ENCODE measurements at regions of chr15 and their contacts with region 1.

Region 1: DNA sequence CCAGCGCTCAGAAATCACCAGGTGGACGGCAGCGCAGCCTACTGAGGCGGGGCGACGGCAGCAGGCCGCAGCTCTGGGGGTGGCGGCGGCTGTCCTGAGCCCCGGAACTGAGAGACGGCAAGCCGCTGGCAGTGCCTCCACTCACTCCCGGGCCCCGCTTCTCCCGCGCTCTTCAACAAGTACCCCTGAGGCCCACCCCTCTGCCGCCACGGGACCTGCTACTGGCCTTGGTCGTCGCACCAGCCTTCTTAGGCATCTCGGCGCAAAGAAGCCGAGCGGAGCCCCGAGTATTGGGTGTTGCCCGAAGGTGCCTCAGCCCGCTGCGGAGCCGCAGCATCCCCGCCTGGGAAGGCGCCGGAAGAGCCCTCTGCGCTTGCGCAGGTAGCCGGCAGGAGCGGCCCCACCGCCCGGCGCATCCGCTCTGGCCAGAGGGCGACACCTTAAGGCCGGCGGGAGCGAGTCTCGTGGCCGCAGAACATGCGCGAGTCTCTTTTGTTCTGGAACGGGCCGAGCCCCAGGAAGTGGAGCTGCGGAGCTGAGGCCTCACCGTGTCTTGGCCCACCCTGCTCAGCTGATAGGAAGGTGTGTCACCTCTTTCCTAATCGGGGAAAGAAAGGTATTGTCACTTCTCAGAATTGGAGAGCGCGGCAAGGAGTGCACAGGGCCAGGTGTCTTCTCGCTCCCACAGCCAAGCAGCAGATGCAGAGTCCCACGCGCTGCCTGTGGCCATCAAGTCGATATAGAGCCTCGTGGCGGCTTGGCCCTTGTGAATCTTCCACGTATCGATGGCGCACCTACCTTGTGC is at the start of gene C15orf40:
- DNase-seq: peak; percentile 89
- H3K4me3 Mint-ChIP-seq: peak within 1 kb of the TSS; percentile 82
- H3K27ac Mint-ChIP-seq: peak within 1 kb of the TSS; percentile 82
- H3K4me1 Mint-ChIP-seq: peaks cover 24% of the 10 kb centered on the region
- H3K27me3 Mint-ChIP-seq: no peaks in the 10 kb centered on the region
- CTCF ChIP-seq: peak; percentile 37
- total RNA-seq, gene C15orf40: 38.1 and 39.3 TPM in 2 replicates

Region 2: GRCh38 chr15:82809404-82810060 is 201.9 kb before region 1 on chr15 and contains the start of gene WHAMM:
- CTCF ChIA-PET with region 1: interaction called, 4 read pairs
- POLR2A ChIA-PET with region 1: interaction called, 11 read pairs
- intact Hi-C with region 1: no loop called
- DNase-seq: peak; percentile 100
- H3K4me3 Mint-ChIP-seq: peak within 1 kb of the TSS; percentile 84
- H3K27ac Mint-ChIP-seq: peak within 1 kb of the TSS; percentile 84
- H3K4me1 Mint-ChIP-seq: peaks cover 22% of the 10 kb centered on the region
- H3K27me3 Mint-ChIP-seq: no peaks in the 10 kb centered on the region
- CTCF ChIP-seq: no peak
- total RNA-seq, gene WHAMM: 8.2 and 10.1 TPM in 2 replicates

Region 3: GRCh38 chr15:82999905-83000671 is 11.4 kb before region 1 on chr15:
- CTCF ChIA-PET with region 1: interaction called, 24 read pairs
- POLR2A ChIA-PET with region 1: interaction called, 13 read pairs
- intact Hi-C with region 1: no loop called
- DNase-seq: peak; percentile 59
- H3K4me3 Mint-ChIP-seq: peak overlapping the region; percentile 67
- H3K27ac Mint-ChIP-seq: peak overlapping the region; percentile 69
- H3K4me1 Mint-ChIP-seq: no peaks in the 10 kb centered on the region
- H3K27me3 Mint-ChIP-seq: no peaks in the 10 kb centered on the region
- CTCF ChIP-seq: peak; percentile 57

Region 4: DNA sequence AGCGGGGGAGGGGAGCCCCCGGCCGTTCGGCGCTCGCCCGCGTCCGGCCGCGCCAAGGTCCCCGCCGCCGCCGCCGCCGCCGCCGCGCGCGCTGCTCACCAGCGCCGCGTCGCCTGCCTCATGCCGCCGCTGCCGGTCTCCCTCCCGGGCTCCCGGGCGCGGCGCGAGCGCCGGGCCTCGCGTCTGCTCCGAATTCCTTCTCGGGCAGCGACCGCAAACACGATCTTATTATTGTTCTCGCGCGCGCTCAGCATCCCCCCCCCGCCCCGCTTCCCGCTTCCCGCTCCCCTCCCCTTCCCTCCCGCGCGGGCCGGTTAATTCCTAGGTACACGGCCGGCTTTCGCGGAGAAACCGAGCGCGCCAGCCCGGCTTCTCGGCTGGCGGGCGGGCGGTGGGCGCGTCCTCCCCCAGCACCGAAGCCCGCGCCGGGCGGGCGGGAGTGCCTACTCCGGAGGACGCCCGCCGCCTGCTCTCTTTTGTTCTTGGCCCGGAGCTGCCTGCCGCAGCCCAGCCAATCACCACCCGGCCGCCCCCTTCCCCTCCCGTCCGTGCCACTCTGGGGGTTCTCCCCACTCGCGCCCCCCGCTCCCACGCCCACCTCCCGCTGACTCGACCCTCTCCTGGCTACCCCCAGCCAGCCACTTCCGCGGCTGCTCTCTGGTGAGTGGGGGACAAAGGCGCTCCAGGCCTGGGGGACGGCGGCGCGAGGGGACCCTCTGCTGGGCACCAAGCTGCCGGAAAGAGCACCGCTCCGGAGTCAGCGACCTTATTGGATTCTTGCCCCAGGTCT is 196.3 kb after region 1 on chr15 and contains the start of gene HDGFL3:
- CTCF ChIA-PET with region 1: interaction called, 8 read pairs
- POLR2A ChIA-PET with region 1: interaction called, 19 read pairs
- intact Hi-C with region 1: no loop called
- DNase-seq: peak; percentile 60
- H3K4me3 Mint-ChIP-seq: no peak within 1 kb of the TSS
- H3K27ac Mint-ChIP-seq: peak within 1 kb of the TSS; percentile 91
- H3K4me1 Mint-ChIP-seq: peaks cover 32% of the 10 kb centered on the region
- H3K27me3 Mint-ChIP-seq: no peaks in the 10 kb centered on the region
- CTCF ChIP-seq: peak; percentile 19
- total RNA-seq, gene HDGFL3: 80.4 and 104 TPM in 2 replicates

Region 5: DNA sequence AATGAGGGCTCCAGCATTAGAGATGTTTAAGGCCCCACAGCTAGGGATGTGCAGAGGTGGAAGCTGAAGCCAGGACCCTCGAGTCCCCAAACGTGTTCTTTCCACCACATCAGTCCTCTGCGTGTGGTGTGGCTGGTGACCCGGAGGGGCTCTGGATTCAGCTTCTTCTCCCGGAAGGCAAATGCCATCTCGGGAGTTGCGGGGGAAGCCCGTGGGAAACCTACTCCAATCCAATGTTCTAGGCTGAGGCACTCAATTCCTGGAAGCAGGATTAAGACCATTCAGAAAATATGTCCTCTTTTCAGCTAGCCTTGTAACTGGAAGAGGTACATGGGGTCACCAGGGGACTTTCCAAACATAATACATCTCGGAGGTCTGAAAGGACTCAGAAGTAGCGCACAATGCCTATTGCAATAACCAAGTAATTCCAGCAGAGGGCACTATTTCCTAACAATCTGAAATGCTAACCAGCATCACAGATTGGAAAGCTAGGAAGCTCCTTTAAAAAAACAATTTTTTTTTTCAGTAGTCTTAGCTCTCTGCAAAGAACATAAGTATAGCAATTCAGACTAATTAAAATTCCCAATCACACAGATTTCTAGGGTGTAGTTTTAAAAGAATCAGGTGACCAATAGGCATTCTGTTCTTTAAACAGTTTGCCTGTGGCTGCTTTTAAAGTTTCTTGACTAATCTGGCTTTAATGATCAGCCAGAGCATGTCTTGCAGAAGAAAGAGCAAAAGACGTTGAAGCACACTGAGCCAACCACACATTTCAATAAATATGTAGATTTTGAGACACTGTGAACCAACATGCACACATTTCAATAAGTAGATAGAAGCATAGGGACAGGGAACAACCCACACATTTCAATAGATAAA is 236.9 kb after region 1 on chr15:
- CTCF ChIA-PET with region 1: no interaction called
- POLR2A ChIA-PET with region 1: no interaction called
- intact Hi-C with region 1: no loop called
- DNase-seq: peak; percentile 72
- H3K4me3 Mint-ChIP-seq: no peak overlapping the region
- H3K27ac Mint-ChIP-seq: no peak overlapping the region
- H3K4me1 Mint-ChIP-seq: peaks cover 26% of the 10 kb centered on the region
- H3K27me3 Mint-ChIP-seq: no peaks in the 10 kb centered on the region
- CTCF ChIP-seq: peak; percentile 91

Region 6: DNA sequence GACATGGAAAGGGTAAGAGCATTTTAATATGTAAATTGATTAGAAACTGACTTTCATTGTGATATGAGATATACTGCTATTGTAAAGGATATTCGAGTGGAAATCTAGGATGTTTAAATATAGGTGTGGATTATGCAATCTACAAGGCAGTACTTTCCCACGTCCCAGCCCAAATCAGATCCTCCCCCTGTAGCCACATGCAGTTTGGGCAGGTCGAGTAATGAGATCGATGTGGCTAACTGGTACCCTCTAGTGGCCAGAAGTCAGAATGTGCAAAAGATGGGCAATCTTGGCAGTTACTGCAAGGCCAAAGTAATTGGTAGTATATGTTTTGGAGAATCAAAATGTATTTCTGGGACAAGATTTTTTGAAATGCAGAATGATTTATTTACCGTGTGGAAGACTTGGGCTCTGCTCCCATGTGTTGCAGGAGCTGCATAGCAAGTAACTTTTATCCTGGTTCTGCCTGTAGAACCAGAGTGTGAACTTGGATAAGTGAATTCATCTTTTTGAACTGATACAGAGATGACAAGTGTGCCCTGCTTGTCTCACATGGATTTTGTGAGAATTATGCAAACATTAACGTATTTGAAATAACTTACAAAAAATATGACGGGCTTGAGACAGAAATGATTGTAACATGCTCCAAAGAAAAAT is 548.0 kb after region 1 on chr15:
- CTCF ChIA-PET with region 1: interaction called, 5 read pairs
- POLR2A ChIA-PET with region 1: no interaction called
- intact Hi-C with region 1: loop called (anchors 2 kb)
- DNase-seq: peak; percentile 88
- H3K4me3 Mint-ChIP-seq: no peak overlapping the region
- H3K27ac Mint-ChIP-seq: no peak overlapping the region
- H3K4me1 Mint-ChIP-seq: peaks cover 6% of the 10 kb centered on the region
- H3K27me3 Mint-ChIP-seq: no peaks in the 10 kb centered on the region
- CTCF ChIP-seq: peak; percentile 79